RWPE1 (cell line): ENCODE measurements at regions of chr9 and their contacts with region 1.

Region 1: DNA sequence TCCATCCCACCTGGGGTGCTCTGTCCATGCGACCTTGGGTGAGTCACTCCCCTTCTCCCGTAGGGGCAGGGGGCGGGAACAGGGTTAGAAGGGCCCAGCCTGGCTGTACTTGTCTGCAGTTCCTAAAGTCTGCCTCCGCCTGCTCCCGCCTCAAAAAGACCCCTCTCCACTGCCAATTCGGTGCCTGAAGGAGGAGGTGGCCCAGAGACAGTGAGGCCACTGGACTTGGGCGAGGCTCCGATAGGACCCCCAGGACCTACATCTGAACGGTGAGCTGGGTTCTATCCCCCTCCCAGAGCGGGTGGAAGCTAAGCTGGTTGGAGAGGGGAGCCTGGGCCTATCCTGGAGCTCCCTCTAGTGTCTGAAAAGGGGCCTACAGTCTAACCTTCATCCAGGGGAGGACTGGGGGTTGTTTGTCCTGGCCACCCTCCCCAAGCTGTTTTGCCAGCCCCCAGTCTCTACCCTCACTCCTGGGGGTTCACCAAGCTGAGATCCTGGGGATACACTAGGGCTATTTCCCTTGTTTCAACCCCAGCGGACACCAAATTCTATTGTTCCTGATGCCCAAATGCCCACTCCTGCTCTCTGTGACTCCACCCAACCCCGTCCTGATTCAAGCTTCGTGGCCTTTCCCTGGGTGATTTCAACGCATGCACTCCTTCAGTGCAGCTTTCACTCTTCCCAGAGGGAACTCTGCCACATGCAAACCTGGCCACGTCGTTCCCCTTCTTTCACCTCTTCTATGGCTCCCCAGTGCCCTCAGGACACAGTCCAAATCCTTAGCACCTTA is 6.1 kb upstream of the CRB2 start:
- DNase-seq: peak; percentile 92
- H3K27ac ChIP-seq: no peak overlapping the region
- CTCF ChIP-seq: peak; percentile 100

Region 2: GRCh38 chr9:123081824-123082223 is 268.1 kb before region 1 on chr9:
- CTCF ChIA-PET with region 1: interaction called, 16 read pairs
- POLR2A ChIA-PET with region 1: no interaction called
- DNase-seq: peak; percentile 34
- H3K27ac ChIP-seq: no peak overlapping the region
- CTCF ChIP-seq: peak; percentile 56

Region 3: DNA sequence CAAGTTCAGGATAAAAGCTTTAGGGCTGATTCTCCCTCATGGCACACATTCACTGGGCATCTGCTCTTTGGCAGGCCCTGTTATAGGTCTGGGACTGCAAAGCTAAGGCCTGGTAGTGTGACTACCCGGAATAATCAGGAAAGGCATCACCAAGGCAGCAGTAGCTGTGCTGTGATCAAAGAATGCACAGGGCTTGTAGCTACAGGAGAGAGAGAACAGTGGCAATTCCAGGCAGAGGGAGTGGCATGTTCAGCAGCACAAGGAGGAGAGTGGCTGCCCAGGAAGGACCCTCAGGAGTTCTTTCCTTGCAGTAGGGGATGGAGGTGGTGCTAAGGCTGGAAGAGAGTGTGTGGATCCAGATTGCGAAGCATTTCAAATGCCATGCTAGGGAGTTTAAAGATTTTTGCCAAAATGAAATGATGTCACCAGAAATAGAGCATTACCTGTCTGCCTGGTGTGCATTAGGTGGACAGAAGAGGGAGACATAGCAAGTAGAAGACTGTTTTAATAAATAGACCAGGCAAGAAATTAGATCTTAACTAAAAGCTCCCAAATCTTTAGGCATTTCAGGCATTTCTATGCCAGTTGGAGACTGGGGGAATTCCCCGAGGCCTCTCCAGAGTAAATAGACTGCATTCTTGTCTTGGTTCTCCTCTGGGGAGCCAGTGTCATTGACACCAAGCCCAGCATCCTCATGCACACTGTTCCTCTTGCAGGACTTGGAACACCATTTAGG is 247.3 kb before region 1 on chr9:
- CTCF ChIA-PET with region 1: interaction called, 75 read pairs
- POLR2A ChIA-PET with region 1: no interaction called
- DNase-seq: no peak
- H3K27ac ChIP-seq: 0 out of 2 replicates have a peak overlapping the region, but pooled peaks have one; percentile 25
- CTCF ChIP-seq: no peak

Region 4: GRCh38 chr9:123338710-123339665 is 10.9 kb before region 1 on chr9:
- CTCF ChIA-PET with region 1: interaction called, 23 read pairs
- POLR2A ChIA-PET with region 1: no interaction called
- DNase-seq: no peak
- H3K27ac ChIP-seq: no peak overlapping the region
- CTCF ChIP-seq: no peak

Region 5: DNA sequence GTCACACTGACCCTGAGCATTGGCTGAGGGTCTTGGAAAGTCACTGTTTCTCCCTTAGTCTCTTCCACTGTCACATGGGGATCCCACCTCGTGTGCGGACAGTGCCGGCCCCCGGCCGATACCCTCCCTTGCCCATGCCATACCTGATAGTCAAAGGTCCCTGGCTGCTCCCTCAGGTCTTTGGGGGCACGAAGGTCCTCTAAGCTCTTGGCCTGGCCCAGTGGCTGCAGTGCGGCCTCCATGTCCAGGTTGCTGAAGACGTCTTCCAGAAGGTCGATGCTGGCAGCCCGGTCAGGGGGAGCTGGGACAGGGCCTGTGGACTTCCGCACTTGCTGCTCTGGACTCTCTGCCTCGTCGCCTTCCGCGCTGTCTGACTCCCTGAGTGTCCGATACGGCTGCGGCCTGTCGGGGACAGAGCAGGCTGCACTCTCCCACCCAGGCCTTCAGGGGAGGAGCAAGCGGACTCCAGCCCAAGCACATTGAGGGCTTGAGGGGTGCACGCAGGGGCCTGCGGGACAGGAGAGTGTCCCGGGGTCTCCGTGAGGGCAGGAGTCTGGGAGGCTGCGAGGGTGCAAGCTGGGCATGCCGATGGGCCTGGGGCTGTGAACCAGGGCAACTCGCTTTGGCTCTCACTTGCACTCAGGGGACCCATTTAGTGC is 33.8 kb after region 1 on chr9:
- CTCF ChIA-PET with region 1: interaction called, 27 read pairs
- POLR2A ChIA-PET with region 1: no interaction called
- DNase-seq: no peak
- H3K27ac ChIP-seq: no peak overlapping the region
- CTCF ChIP-seq: no peak

Region 6: GRCh38 chr9:123445981-123446610 is 96.2 kb after region 1 on chr9:
- CTCF ChIA-PET with region 1: no interaction called
- POLR2A ChIA-PET with region 1: no interaction called
- DNase-seq: peak; percentile 65
- H3K27ac ChIP-seq: no peak overlapping the region
- CTCF ChIP-seq: no peak